Naive thymus-derived CD4-positive, alpha-beta T cell (primary cell): ENCODE measurements at regions of chr2 and their contacts with region 1.

Region 1: GRCh38 chr2:217886720-217887309 is 116.0 kb downstream of the TNS1 start:
- DNase-seq: peak; percentile 11 to 58 (median 41)
- ATAC-seq: peak; percentile 69
- H3K4me3 ChIP-seq: no peak overlapping the region
- H3K4me3 Mint-ChIP-seq: no peak overlapping the region
- H3K27ac ChIP-seq: no peak overlapping the region
- H3K27ac Mint-ChIP-seq: no peak overlapping the region
- H3K4me1 ChIP-seq: no peaks in the 10 kb centered on the region
- H3K4me1 Mint-ChIP-seq: peaks cover 0 to 4% (median 0%) of the 10 kb centered on the region in 7 donors
- H3K27me3 ChIP-seq: no peaks in the 10 kb centered on the region
- H3K27me3 Mint-ChIP-seq: peaks cover 0 to 9% (median 0%) of the 10 kb centered on the region in 5 donors

Region 2: DNA sequence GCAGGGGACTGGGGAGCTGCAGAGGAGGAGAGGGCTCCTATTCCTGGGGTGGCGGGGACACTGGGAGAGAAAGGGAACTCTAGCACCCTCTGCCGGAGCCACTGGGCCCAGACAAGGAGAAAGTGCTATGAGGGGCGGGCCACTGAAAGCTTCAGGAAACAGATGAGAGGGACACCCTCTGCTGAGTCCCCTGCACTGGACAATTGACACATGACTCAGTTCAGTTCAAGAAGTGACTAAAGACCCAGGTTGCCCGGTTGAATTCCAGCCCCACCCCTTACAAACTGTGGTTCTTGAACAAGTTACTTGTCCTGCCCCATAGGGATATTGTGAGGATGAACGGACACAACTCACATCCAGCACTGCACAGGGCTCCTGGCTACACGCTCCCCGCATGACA is 187.2 kb after region 1 on chr2:
- CTCF ChIA-PET with region 1: no interaction called
- POLR2A ChIA-PET with region 1: no interaction called
- intact Hi-C with region 1: loop called in 1 of 2 experiments (anchors 2 kb)
- DNase-seq: no peak
- ATAC-seq: peak; percentile 72
- H3K4me3 ChIP-seq: no peak overlapping the region
- H3K4me3 Mint-ChIP-seq: no peak overlapping the region
- H3K27ac ChIP-seq: no peak overlapping the region
- H3K27ac Mint-ChIP-seq: no peak overlapping the region
- H3K4me1 ChIP-seq: peaks cover 0 to 2% of the 10 kb centered on the region in 2 donors
- H3K4me1 Mint-ChIP-seq: peaks cover 0 to 6% (median 0%) of the 10 kb centered on the region in 7 donors
- H3K27me3 ChIP-seq: no peaks in the 10 kb centered on the region
- H3K27me3 Mint-ChIP-seq: no peaks in the 10 kb centered on the region

Region 3: GRCh38 chr2:218367415-218368153 is 480.8 kb after region 1 on chr2:
- CTCF ChIA-PET with region 1: no interaction called
- POLR2A ChIA-PET with region 1: no interaction called
- intact Hi-C with region 1: no loop called
- DNase-seq: peak; percentile 55 to 79 (median 62)
- ATAC-seq: peak; percentile 89
- H3K4me3 ChIP-seq: peak overlapping the region; percentile 74
- H3K4me3 Mint-ChIP-seq: peak overlapping the region; percentile 75 to 87 (median 82)
- H3K27ac ChIP-seq: peak overlapping the region; percentile 72
- H3K27ac Mint-ChIP-seq: peak overlapping the region; percentile 14 to 94 (median 89)
- H3K4me1 ChIP-seq: peaks cover 0 to 17% of the 10 kb centered on the region in 2 donors
- H3K4me1 Mint-ChIP-seq: peaks cover 11 to 51% (median 31%) of the 10 kb centered on the region in 7 donors
- H3K27me3 ChIP-seq: no peaks in the 10 kb centered on the region
- H3K27me3 Mint-ChIP-seq: peaks cover 0 to 33% (median 0%) of the 10 kb centered on the region in 5 donors

Region 4: DNA sequence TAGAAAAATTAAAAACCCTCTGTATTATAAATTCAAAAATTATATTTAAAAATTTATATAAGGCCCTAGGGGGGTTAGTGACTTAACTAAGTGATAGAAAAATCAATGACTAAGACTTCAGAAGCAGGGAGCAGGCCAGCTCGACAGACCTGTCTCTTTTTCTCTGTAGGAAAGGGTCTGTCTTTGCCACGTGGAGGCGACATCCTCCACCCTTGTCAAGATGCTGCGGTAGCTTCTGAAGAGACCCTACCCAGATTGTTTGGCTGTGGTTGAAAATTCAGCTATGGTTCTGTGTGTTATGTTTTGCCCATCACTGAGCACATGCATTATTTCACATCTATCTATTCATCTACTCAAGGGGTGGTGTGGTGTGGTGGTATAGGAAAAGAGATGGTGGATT is 1732.4 kb after region 1 on chr2:
- CTCF ChIA-PET with region 1: no interaction called
- POLR2A ChIA-PET with region 1: no interaction called
- intact Hi-C with region 1: no loop called
- DNase-seq: no peak
- ATAC-seq: no peak
- H3K4me3 ChIP-seq: no peak overlapping the region
- H3K4me3 Mint-ChIP-seq: no peak overlapping the region
- H3K27ac ChIP-seq: no peak overlapping the region
- H3K27ac Mint-ChIP-seq: no peak overlapping the region
- H3K4me1 ChIP-seq: no peaks in the 10 kb centered on the region
- H3K4me1 Mint-ChIP-seq: peaks cover 0 to 3% (median 0%) of the 10 kb centered on the region in 7 donors
- H3K27me3 ChIP-seq: no peaks in the 10 kb centered on the region
- H3K27me3 Mint-ChIP-seq: peaks cover 0 to 16% (median 4%) of the 10 kb centered on the region in 5 donors